Posterior cingulate gyrus (tissue), 11 donors: ENCODE measurements at regions of chr3 and their contacts with region 1.

Region 1: DNA sequence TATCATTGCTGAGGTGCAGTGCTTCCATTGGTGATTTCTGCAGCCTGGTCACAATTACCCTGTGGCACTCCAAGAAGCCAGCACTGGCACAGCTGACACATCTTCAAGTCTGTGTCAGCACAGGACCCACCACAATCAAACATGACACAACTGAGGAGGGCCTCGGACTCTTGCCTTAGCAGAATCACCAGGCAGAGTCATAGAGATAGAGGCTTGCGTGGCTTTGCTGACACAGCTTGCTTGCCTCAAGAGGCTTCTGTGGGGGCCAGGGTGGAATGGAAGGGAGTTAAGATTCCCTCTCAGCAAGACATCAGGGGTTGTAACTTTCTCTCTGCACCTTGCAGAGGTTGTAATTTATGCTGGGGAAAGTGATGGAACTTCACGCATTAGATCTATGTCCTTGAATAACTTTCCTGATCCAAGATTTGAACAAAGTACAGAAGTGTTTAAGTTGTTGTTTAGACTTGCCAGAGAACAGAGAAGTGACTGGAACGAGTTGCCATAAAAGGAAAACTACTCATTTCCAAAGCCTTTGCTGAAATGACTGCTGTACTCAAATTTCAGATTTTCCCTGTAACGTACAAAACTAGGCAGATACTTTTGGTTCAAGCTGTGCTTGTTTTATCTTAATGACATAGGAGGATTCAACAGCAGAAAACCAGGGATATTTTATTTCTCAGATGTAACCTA is 170.7 kb downstream of the DIPK2A start:
- DNase-seq: no peak

Region 2: GRCh38 chr3:144187531-144188210 is 45.4 kb after region 1 on chr3:
- intact Hi-C with region 1: loop called (anchors 2 kb)
- DNase-seq: no peak

Region 3: DNA sequence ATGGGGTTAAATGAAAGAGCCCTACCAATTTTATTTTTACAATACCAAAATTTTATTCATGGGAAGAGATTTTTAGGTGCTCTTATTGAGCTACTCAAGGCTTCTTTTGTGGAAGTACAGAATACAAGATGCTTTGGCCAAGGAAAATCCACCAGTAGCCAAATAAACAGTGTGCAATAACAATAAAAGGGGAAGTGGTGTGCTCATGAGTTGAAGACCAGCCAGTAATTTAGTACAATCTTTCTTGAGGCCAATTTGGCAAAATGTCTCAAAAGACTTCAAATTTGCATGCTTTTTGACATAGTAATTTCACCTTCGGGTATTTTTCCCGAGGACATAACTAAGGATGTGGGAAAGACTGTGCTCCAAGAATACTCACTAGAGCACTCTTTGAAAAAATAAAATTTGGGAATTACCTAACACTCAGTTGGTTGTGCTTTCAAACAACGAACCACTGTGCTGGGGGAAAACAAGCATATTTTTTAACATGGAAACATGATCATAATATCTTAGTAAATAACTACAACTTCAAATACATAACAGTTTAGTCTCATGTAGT is 123.3 kb after region 1 on chr3:
- intact Hi-C with region 1: no loop called
- DNase-seq: no peak

Region 4: DNA sequence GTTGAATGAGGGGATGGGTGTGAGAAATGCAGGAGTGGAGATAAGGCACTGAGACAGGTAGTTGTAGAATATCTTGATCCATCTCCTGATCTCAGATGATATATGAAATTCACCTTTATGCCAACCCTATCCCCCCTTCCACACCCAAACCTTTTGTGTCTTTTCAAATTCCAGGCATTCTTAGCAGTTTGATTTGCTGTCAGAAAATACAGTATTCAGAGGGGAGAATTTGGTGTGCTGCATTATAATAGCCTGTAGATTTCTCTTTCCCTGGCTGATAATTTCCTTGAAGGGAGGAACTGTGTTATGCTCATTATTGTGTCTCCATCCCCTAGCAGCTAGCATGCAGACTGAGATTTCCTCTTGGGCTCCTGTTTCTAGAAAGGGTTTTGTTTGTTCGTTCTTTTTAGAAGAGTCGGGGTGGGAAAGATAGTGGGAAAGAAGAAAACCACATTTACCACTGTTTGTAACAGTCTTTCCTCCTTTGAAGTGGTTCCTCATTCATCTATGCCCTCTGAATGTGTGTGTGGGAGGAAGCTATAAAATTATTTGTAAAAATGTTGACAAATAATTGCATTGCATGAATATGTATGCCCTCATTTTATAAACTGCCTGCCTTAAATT is 202.7 kb after region 1 on chr3:
- intact Hi-C with region 1: no loop called
- DNase-seq: no peak